PC-9 (cell line): ENCODE measurements at regions of chr2 and their contacts with region 1.

Region 1: GRCh38 chr2:241950413-241951315 is 81.1 kb downstream of the RTP5 start:
- DNase-seq: peak; percentile 56 to 85
- H3K4me3 ChIP-seq: no peak overlapping the region
- H3K27ac ChIP-seq: no peak overlapping the region
- H3K4me1 ChIP-seq: no peaks in the 10 kb centered on the region
- H3K27me3 ChIP-seq: peaks cover 76% of the 10 kb centered on the region
- CTCF ChIP-seq: peak; percentile 98

Region 2: DNA sequence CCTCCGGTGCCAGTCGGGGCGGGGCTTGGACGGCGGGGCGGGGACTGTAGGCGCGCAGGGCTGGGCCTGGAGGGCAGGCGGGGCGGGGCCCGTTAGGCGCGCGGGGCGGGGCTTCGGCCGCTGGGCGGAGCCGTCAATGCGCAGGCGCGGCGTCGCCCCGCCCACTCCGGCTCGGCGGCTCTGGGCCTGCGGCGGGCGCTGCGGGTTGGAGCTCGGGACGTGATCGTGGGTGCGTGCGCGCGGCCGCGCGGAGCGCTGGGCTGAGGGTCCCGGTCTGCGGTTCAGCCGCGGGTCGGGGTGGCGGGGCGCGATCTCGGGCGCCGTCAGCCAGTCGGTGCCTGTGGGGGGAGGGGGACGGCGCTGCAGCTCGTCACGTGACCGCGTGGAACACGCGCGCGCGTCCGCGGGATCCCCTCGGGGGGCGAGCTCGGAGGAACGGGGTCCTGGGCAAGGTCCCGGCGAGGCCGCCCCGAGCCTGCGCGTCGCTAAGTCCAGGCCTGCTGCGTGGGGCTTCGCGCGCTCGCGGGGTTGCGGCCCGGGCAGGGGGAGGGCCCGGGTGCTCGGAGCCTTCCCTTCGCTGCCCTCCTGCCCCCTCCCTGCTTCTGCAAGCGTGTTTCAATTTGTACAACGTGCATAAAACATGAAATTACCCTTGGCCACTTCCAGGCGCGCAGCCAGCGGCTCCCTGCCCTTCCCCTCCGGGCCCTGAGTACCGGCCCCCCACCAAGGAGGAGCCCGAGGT is 216.0 kb before region 1 on chr2 and contains the start of gene D2HGDH:
- CTCF ChIA-PET with region 1: interaction called, 12 read pairs
- POLR2A ChIA-PET with region 1: no interaction called
- intact Hi-C with region 1: no loop called
- DNase-seq: peak; percentile 65 to 98
- H3K4me3 ChIP-seq: peak within 1 kb of the TSS; percentile 85
- H3K27ac ChIP-seq: peak within 1 kb of the TSS; percentile 36
- H3K4me1 ChIP-seq: peaks cover 16% of the 10 kb centered on the region
- H3K27me3 ChIP-seq: no peaks in the 10 kb centered on the region
- CTCF ChIP-seq: no peak
- total RNA-seq, gene D2HGDH: 131 and 232 TPM in 2 replicates

Region 3: DNA sequence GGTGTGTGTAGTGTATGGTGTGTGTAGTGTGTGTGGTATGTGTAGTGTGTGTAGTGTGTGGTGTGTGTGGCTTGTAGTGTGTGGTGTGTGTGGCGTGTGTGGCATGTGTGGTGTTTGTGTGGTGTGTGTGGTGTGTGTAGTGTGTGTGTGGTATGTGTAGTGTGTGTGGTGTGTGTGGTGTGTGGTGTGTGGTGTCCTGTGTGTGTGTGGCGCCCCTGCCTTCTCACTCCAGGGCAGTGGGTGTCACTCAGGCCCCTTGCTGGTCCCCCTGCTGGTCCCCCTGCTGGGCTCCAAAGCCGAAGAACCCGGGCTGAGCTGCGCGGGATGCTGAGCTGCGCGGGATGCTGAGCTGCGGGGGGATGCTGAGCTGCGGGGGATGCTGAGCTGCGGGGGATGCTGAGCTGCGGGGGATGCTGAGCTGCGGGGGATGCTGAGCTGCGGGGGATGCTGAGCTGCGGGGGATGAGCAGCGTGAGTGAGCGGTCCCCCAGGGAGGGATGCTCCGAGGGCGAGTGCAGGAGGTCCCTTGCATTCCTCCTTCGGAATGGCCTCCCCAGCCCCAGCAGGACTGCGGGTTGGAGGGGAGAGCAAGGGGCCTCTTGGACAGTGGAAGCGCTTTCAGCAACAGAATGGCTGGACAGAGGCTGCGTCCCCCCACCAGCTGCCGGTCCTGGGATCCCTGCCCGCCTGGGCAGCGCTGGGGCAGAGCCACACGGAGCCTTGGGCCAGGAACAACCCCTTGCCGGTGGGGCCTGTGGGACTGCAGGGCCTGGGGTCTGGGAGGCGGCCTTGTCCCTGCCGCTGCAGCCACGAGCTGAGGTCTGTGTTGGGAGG is 84.5 kb before region 1 on chr2:
- CTCF ChIA-PET with region 1: no interaction called
- POLR2A ChIA-PET with region 1: no interaction called
- intact Hi-C with region 1: no loop called
- DNase-seq: no peak
- H3K4me3 ChIP-seq: no peak overlapping the region
- H3K27ac ChIP-seq: no peak overlapping the region
- H3K4me1 ChIP-seq: no peaks in the 10 kb centered on the region
- H3K27me3 ChIP-seq: peaks cover 55% of the 10 kb centered on the region
- CTCF ChIP-seq: no peak

Region 4: GRCh38 chr2:241906826-241907570 is 43.7 kb before region 1 on chr2:
- CTCF ChIA-PET with region 1: no interaction called
- POLR2A ChIA-PET with region 1: no interaction called
- intact Hi-C with region 1: no loop called
- DNase-seq: peak in 1 of 2 experiments; percentile 21
- H3K4me3 ChIP-seq: no peak overlapping the region
- H3K27ac ChIP-seq: no peak overlapping the region
- H3K4me1 ChIP-seq: no peaks in the 10 kb centered on the region
- H3K27me3 ChIP-seq: peaks cover 94% of the 10 kb centered on the region
- CTCF ChIP-seq: no peak

Region 5: GRCh38 chr2:241975890-241976695 is 25.4 kb after region 1 on chr2:
- CTCF ChIA-PET with region 1: no interaction called
- POLR2A ChIA-PET with region 1: no interaction called
- intact Hi-C with region 1: no loop called
- DNase-seq: no peak
- H3K4me3 ChIP-seq: no peak overlapping the region
- H3K27ac ChIP-seq: no peak overlapping the region
- H3K4me1 ChIP-seq: no peaks in the 10 kb centered on the region
- H3K27me3 ChIP-seq: peaks cover 90% of the 10 kb centered on the region
- CTCF ChIP-seq: no peak

Region 6: GRCh38 chr2:241999184-241999583 is 48.5 kb after region 1 on chr2:
- CTCF ChIA-PET with region 1: no interaction called
- POLR2A ChIA-PET with region 1: no interaction called
- intact Hi-C with region 1: loop called (anchors 5 kb)
- DNase-seq: no peak
- H3K4me3 ChIP-seq: no peak overlapping the region
- H3K27ac ChIP-seq: no peak overlapping the region
- H3K4me1 ChIP-seq: no peaks in the 10 kb centered on the region
- H3K27me3 ChIP-seq: peaks cover 96% of the 10 kb centered on the region
- CTCF ChIP-seq: no peak

Region 7: DNA sequence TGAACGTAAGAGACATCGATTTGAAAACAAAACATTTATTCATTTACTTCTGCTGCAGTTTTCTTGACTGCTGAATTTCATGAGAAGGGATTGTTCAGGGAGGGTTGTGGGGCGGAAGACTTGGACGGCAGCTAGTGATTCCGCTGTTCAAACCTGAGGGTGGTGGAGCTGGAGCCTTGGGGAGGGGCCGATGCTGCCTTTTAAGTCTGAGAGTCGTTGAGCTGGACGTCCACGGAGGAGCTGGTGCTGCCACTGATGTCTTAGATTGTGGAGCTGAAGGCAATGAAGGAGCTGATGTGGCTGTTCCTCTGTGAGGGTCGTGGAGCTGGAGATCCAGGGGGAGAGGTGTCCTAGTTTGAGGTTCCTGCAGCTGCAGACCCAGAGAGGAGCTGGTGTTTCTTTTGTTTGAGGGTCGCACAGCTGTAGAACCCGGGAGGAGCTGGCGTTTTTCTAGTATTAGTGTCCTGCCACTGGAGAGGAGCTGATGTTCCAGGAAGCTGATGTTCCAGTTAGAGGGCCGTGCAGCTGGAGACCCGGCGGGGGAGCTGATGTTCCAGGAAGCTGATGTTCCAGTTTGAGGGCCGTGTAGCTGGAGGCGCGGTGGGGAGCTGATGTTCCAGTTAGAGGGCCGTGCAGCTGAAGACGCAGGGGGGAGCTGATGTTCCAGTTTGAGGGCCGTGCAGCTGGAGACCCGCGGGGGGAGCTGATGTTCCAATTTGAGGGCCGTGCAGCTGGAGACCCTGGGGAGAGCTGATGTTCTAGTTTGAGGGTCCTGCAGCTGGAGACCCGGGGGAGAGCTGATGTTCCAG is 69.7 kb after region 1 on chr2:
- CTCF ChIA-PET with region 1: interaction called, 5 read pairs
- POLR2A ChIA-PET with region 1: no interaction called
- intact Hi-C with region 1: loop called (anchors 2 kb)
- DNase-seq: peak in 1 of 2 experiments; percentile 43
- H3K4me3 ChIP-seq: no peak overlapping the region
- H3K27ac ChIP-seq: no peak overlapping the region
- H3K4me1 ChIP-seq: no peaks in the 10 kb centered on the region
- H3K27me3 ChIP-seq: peaks cover 96% of the 10 kb centered on the region
- CTCF ChIP-seq: peak; percentile 26; the same call in 1 of the 2 replicates

Region 8: DNA sequence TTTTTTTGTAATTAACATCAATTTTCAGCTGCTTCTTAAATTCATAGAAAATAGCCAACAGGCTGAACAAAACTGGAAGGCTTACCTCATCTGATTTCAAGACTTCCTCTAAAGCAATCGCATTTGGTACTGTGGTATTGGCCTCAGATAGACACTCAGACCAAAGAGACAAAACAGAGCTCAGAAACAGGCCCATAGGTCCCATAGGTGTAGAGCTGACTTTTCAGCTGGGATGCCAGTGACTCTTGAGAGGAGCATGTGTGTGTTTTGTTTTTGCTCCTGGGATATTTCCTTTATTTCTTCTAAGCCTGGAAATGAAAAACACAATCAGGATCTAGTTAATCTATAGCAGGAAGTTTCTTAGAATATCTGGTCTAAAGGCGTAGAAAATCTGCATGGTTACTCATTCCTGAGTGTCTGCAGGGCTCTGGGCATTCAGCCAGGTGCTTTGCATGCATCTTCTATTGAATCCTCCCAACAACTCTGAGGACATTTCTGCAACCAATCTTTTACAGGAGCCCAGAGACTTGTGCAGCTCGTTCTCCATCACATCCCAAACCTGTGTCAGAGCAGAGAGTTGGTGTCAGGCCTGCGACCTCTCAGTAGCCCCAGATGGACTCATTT is 109.7 kb after region 1 on chr2:
- CTCF ChIA-PET with region 1: no interaction called
- POLR2A ChIA-PET with region 1: no interaction called
- intact Hi-C with region 1: no loop called
- DNase-seq: peak in 1 of 2 experiments; percentile 61
- H3K4me3 ChIP-seq: no peak overlapping the region
- H3K27ac ChIP-seq: no peak overlapping the region
- H3K4me1 ChIP-seq: peaks cover 18% of the 10 kb centered on the region
- H3K27me3 ChIP-seq: peaks cover 40% of the 10 kb centered on the region
- CTCF ChIP-seq: no peak

Region 9: GRCh38 chr2:242088471-242089212 is 138.0 kb after region 1 on chr2:
- CTCF ChIA-PET with region 1: no interaction called
- POLR2A ChIA-PET with region 1: no interaction called
- intact Hi-C with region 1: loop called (anchors 2 kb)
- DNase-seq: peak; percentile 86 to 99
- H3K4me3 ChIP-seq: peak overlapping the region; percentile 96
- H3K27ac ChIP-seq: no peak overlapping the region
- H3K4me1 ChIP-seq: peaks cover 18% of the 10 kb centered on the region
- H3K27me3 ChIP-seq: no peaks in the 10 kb centered on the region
- CTCF ChIP-seq: no peak